ENCODE measurements at regions of chr21 and their contacts with region 1.

Region 1: DNA sequence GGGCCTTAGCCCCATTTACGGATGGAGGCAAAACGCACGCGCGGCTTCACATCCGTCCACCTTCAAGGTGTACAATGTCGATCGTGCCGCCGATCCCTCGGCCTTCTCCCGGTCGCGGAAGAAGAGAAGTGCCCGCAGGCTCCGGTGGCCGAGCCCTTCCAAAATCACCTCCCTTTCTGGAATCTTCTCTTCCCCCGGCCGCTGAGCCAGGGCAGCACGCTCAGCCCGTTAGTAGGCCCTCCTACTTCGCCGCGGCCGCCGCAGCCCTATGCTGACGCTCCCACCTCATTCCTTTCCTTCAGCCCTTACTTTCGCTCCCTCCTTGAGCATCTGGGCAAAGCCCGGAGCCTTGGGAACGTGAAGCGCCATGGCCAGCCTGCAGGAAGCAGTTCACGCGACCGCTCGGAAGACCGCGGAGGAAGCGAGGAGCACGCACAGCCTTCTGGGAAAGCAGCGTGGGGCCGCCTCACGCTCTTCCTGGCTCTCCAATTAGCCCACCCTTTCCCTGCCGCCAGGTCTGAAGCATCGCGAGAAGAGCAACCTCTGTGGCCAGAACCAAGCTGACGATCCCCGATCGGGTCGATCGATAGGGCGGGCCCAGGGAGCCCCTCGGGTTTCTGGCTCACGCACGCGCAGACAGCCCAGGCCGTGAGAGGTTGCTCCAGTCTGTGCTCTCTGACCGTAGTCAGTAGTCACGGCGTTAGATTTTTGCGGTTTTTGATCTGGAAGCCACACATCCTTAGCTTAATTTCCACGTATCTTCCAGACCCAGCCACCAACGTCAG is at the start of gene CCT8:
- DNase-seq: peak; percentile 100
- H3K4me3 ChIP-seq: peak within 1 kb of the TSS; percentile 100
- H3K27ac ChIP-seq: peak within 1 kb of the TSS; percentile 74
- H3K4me1 ChIP-seq: peaks cover 46% of the 10 kb centered on the region
- CTCF ChIP-seq: no peak
- total RNA-seq, gene CCT8: 229 and 240 TPM in 2 replicates

Region 2: DNA sequence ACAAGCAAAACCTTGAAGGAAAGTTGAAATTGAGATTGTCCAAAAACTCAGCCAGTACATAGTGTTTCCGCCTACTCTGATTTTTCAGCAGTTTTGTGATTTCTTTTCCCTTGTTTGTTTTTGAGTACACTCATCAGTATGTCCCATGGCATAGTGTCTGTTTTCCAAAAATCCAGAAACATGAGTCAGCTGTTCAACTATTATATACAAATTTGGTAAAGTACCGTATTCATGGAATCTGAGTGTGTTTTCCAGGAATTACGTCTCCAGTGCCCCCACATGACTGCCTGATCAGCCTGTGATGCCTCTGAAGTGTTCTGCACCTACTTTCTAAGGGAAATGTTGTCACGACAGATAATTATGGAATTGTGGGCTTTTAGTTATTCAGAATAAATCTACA is 267.5 kb before region 1 on chr21:
- CTCF ChIA-PET with region 1: no interaction called
- POLR2A ChIA-PET with region 1: no interaction called
- intact Hi-C with region 1: no loop called
- DNase-seq: no peak
- H3K4me3 ChIP-seq: no peak overlapping the region
- H3K27ac ChIP-seq: no peak overlapping the region
- H3K4me1 ChIP-seq: no peaks in the 10 kb centered on the region
- CTCF ChIP-seq: no peak

Region 3: DNA sequence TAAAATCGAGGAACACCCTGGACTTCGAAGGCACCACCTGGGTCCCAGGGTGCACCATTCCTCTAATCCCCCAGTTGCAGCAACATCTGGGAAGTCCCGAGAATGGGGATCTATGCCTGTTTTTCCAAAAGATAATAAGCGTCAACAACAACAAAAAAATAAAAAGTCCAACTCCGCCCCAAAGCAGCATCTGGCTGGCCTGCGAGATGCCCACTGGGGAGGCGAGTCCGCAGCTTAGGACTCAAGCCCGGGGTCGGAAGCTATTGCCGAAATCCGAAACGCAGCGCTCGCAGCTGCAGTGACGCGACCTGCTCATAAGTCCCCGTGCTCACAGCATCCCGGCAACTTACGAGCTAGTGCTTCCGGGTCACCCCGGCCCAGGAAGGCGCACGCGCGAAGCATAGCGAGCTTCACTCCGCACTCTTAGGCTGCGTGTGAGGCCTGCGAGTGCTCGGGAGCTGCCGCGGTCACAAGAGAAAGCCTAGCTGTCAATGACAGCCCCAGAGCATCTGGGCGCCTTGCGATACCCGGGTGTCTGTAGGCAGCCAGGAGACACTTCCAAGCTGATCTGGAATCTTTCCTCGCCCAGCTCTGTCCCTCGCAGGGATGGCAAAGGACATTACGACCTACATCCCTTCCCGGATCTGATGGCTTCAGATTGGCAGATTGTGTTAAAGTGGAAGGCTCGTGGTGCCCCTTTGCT is 70.8 kb before region 1 on chr21:
- CTCF ChIA-PET with region 1: no interaction called
- POLR2A ChIA-PET with region 1: interaction called, 11 read pairs
- intact Hi-C with region 1: no loop called
- DNase-seq: peak; percentile 98
- H3K4me3 ChIP-seq: peak overlapping the region; percentile 76
- H3K27ac ChIP-seq: peak overlapping the region; percentile 77
- H3K4me1 ChIP-seq: peaks cover 5% of the 10 kb centered on the region
- CTCF ChIP-seq: no peak

Region 4: GRCh38 chr21:29024474-29025327 is 48.7 kb before region 1 on chr21 and contains the start of gene USP16:
- CTCF ChIA-PET with region 1: no interaction called
- POLR2A ChIA-PET with region 1: interaction called, 35 read pairs
- intact Hi-C with region 1: loop called (anchors 1 kb)
- DNase-seq: peak; percentile 97
- H3K4me3 ChIP-seq: peak within 1 kb of the TSS; percentile 85
- H3K27ac ChIP-seq: peak within 1 kb of the TSS; percentile 79
- H3K4me1 ChIP-seq: peaks cover 32% of the 10 kb centered on the region
- CTCF ChIP-seq: no peak
- total RNA-seq, gene USP16: 22.8 and 23.1 TPM in 2 replicates

Region 5: GRCh38 chr21:29125191-29125590 is 51.8 kb after region 1 on chr21:
- CTCF ChIA-PET with region 1: no interaction called
- POLR2A ChIA-PET with region 1: interaction called, 14 read pairs
- intact Hi-C with region 1: no loop called
- DNase-seq: peak; percentile 56
- H3K4me3 ChIP-seq: peak overlapping the region; percentile 29
- H3K27ac ChIP-seq: peak overlapping the region; percentile 29
- H3K4me1 ChIP-seq: peaks cover 31% of the 10 kb centered on the region
- CTCF ChIP-seq: 0 out of 2 replicates have a peak, but pooled peaks have one; percentile 9

Region 6: GRCh38 chr21:29195981-29196669 is 122.7 kb after region 1 on chr21:
- CTCF ChIA-PET with region 1: no interaction called
- POLR2A ChIA-PET with region 1: no interaction called
- intact Hi-C with region 1: no loop called
- DNase-seq: peak; percentile 55
- H3K4me3 ChIP-seq: no peak overlapping the region
- H3K27ac ChIP-seq: no peak overlapping the region
- H3K4me1 ChIP-seq: peaks cover 11% of the 10 kb centered on the region
- CTCF ChIP-seq: peak; percentile 70